Aorta (tissue), 5 donors: ENCODE measurements at regions of chr2 and their contacts with region 1.

Region 1: GRCh38 chr2:241224018-241224850 is 35.8 kb downstream of the ANO7 start:
- DNase-seq: peak; percentile 50 to 77
- ATAC-seq: peak; percentile 7
- H3K4me3 ChIP-seq: no peak overlapping the region
- H3K27ac ChIP-seq: no peak overlapping the region
- H3K4me1 ChIP-seq: no peaks in the 10 kb centered on the region
- H3K27me3 ChIP-seq: no peaks in the 10 kb centered on the region

Region 2: DNA sequence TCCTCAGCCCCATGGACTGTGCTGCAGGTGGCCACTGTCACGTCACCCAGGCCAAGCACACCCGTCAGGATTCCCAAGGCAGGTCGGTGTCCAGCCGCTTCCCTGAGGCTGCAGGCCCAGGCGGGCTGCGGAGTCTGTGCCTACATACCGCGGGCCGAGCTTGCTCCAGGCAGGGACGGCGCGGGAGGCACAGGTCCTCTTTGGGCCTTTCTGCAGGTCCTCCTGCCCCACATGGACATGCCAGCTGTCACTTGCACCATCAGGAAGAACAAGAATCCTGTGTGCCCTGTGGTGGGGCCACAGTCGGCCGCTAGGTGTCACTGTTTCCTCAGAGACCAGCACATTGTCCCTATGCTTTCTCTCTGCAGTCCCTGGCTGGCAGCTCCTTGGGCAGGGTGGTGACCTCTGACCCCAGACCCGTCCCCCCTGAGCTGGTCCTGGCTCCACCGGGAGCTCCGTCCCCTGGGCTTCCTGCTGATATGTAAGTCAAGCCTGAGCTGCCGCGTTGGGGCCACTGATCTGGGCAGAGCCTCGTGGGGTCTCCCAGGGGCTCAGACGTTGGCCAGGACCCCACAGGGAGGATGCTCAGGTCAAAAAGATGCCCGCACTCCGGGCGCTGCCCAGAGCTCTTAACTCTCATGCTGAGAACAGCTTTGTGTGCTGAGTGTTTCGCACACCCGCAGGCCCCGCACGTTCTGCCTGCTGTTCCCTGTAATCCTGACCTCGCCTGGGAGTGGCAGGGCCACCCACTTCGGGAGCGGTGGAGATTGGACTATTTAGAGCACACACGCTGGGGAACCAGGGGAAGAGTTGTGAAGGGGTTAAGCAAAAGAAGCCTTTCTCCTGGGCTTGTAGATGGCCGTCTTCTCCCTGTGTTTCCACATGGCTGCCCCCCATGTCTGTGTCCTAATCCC is 372.9 kb before region 1 on chr2:
- intact Hi-C with region 1: loop called in 1 of 2 experiments (anchors 10 kb)
- DNase-seq: peak; percentile 86 to 94
- ATAC-seq: peak; percentile 84
- H3K4me3 ChIP-seq: no peak overlapping the region
- H3K27ac ChIP-seq: no peak overlapping the region
- H3K4me1 ChIP-seq: no peaks in the 10 kb centered on the region
- H3K27me3 ChIP-seq: no peaks in the 10 kb centered on the region